H1 (cell line): ENCODE measurements at regions of chr1 and their contacts with region 1.

Region 1: DNA sequence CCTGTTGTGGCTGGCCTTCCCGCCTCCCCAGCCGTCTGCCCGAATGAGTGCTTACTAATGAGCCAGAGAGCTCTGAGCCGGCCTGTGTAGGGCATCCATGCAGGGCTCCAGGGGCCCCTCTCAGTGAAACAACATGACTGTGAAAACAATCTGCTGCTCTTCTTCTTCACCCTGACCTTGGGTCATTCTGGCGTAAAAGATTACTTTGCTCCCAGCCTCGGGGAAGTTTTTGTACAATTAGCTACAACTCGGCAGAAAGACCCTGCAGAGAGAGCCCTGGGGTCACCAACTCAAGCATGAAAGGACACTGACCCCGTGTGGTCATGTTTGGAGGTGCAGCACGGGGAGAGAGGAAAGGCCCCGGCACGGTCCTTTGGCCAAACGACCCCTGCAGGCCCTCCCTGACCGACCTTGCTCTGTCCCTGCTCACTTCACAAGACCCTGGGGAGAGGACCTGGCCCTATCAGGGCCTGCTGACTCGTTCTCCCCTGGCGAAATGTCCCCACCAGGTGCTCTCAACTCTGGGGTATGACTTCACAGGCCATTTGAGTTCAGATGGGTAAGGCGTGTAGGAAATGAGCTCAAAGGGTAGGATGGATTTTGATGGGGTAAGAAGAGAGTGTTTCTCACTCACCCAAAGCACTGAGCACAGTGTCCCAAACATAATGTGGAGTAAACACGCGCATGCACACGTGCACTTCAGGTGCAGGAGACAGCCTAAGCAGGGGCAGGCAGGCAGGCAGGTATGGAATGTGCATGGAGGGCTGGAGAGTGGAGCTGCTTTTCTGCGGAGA is 22.9 kb upstream of the FAM20B start:
- DNase-seq: peak; percentile 82 to 99
- H3K4me3 ChIP-seq: peak overlapping the region in 1 of 4 experiments; percentile 39; a peak in 1 of 8 replicates
- H3K27ac ChIP-seq: no peak overlapping the region
- H3K4me1 ChIP-seq: no peaks in the 10 kb centered on the region
- H3K27me3 ChIP-seq: no peaks in the 10 kb centered on the region
- CTCF ChIP-seq: peak; percentile 83 to 98 (median 97)
- EP300 ChIP-seq: no peak
- POLR2A ChIP-seq: no peak
- RAD21 ChIP-seq: peak; percentile 97 to 98

Region 2: DNA sequence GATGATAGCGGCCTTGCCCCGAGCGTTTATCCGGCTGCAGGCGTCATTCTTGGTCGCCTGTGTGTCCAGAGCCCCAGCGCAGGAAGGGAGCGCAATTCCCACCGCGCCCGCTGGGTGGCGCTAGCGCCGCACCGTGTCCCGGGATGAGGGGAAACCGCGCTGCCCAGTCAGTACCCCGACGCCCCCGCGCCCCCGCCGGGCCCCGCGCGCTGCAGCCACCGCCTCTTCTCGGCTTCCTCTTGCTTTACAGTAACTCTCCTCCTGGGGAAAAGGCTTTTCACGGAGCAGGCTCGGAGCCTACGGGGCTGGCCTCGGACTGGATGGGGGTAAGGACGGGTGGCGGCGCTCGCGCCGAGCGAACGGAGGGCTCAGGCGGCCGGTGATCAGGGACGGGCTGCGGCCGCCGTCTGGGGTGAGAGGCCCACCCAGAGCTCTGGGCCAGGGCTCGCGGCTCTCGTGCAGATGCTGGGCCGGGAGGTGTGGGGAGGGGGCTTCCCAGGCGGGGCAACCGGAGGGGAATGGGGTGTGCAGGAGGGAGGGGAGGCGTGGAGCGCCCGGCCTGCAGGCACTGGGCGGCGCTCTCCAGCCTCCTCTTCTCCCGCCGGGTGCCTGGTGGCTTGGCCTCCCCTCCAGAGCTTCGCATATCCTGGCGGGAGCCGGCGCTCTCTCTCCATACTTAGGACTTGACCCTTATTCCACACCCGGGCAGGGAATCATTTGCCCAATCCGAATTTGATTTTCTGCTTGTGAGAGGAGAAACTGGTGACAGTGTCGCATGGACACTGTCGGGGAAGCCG is 460.0 kb before region 1 on chr1:
- CTCF ChIA-PET with region 1: interaction called, 92 read pairs
- POLR2A ChIA-PET with region 1: interaction called, 4 read pairs
- DNase-seq: peak; percentile 71 to 100
- H3K4me3 ChIP-seq: peak overlapping the region; percentile 51 to 94 (median 90)
- H3K27ac ChIP-seq: peak overlapping the region; percentile 73; the same call in 1 of the 2 replicates
- H3K4me1 ChIP-seq: peaks cover 0 to 8% (median 3%) of the 10 kb centered on the region in 4 experiments; a peak in 2 of 7 replicates
- H3K27me3 ChIP-seq: no peaks in the 10 kb centered on the region
- CTCF ChIP-seq: peak; percentile 77 to 94 (median 92)
- EP300 ChIP-seq: no peak; a peak in 1 of 3 replicates
- POLR2A ChIP-seq: no peak; a peak in 1 of 3 replicates
- RAD21 ChIP-seq: peak; percentile 82 to 88

Region 3: DNA sequence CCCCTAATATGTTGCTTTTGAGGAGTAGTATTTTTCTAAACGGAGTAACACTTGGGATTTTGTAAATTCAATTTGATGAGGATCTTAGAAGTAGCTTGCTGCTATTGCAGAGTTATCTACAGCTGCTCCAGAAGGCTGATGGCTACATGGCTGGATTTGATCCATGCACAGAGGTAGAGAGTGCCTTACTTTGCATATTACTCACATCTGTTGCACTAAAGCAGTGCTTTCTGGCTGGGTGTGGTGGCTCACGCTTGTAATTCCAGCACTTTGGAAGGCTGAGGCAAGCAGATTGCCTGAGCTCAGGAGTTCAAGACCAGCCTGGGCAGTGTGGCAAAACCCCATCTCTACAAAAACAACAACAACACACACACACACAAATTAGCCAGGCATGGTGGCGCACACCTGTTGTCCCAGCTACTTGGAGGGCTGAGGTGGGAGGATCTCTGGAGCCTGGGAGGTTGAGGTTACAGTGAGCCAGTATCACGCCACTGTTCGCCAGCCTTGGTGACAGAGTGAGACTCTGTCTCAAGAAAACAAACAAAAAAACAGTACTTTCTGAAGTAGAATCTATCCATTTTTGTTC is 253.1 kb before region 1 on chr1:
- CTCF ChIA-PET with region 1: interaction called, 15 read pairs
- POLR2A ChIA-PET with region 1: no interaction called
- DNase-seq: no peak
- H3K4me3 ChIP-seq: no peak overlapping the region
- H3K27ac ChIP-seq: no peak overlapping the region
- H3K4me1 ChIP-seq: no peaks in the 10 kb centered on the region; a peak in 1 of 7 replicates
- H3K27me3 ChIP-seq: no peaks in the 10 kb centered on the region
- CTCF ChIP-seq: no peak
- EP300 ChIP-seq: no peak
- POLR2A ChIP-seq: no peak
- RAD21 ChIP-seq: no peak

Region 4: DNA sequence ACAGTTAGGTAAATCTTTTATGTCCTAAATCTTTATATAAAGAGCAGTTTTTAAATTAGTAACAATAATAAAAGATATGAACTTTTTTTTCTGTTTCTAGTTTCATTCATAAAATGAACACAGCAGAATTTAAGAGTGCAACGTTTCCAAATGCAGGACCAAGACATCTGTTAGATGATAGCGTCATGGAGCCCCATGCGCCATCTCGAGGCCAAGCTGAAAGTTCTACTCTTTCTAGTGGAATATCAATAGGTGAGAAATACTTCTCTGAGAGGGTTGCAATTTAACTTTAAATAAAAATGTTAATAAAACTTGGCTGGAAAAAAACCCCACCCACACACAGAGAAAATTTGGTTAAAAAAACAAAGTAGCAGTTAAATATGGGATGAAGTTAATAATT is 116.9 kb before region 1 on chr1:
- CTCF ChIA-PET with region 1: interaction called, 12 read pairs
- POLR2A ChIA-PET with region 1: no interaction called
- DNase-seq: no peak
- H3K4me3 ChIP-seq: no peak overlapping the region
- H3K27ac ChIP-seq: no peak overlapping the region
- H3K4me1 ChIP-seq: no peaks in the 10 kb centered on the region
- H3K27me3 ChIP-seq: no peaks in the 10 kb centered on the region
- CTCF ChIP-seq: no peak
- EP300 ChIP-seq: no peak
- POLR2A ChIP-seq: no peak
- RAD21 ChIP-seq: 0 out of 4 replicates have a peak, but pooled peaks of 1 of the 2 experiments have one; percentile 3

Region 5: DNA sequence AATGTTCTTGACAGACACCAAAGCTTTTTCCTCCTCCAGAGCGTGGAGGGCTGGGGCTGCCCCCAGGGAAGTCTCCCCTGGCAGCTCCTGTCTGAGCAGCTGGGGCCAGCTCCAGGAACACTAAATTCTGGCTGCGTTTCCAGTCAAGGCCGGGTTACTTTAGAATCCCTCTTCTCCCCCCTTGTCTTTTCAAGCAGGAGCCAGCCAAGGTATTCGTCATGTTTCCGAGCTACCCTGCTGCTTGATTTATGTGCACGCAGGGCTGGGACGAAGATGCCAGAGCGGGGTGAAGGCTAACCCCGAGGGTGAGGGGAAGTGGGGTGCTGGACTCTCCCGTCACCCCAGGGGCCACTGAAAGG is 63.8 kb before region 1 on chr1:
- CTCF ChIA-PET with region 1: interaction called, 29 read pairs
- POLR2A ChIA-PET with region 1: interaction called, 3 read pairs
- DNase-seq: peak in 1 of 2 experiments; percentile 42
- H3K4me3 ChIP-seq: no peak overlapping the region
- H3K27ac ChIP-seq: no peak overlapping the region
- H3K4me1 ChIP-seq: peaks cover 0 to 2% (median 0%) of the 10 kb centered on the region in 4 experiments; a peak in 2 of 7 replicates
- H3K27me3 ChIP-seq: no peaks in the 10 kb centered on the region
- CTCF ChIP-seq: no peak
- EP300 ChIP-seq: no peak
- POLR2A ChIP-seq: no peak
- RAD21 ChIP-seq: no peak

Region 6: GRCh38 chr1:179016747-179017549 is 14.2 kb after region 1 on chr1:
- CTCF ChIA-PET with region 1: interaction called, 19 read pairs
- POLR2A ChIA-PET with region 1: no interaction called
- DNase-seq: no peak
- H3K4me3 ChIP-seq: no peak overlapping the region
- H3K27ac ChIP-seq: no peak overlapping the region
- H3K4me1 ChIP-seq: no peaks in the 10 kb centered on the region
- H3K27me3 ChIP-seq: no peaks in the 10 kb centered on the region
- CTCF ChIP-seq: no peak
- EP300 ChIP-seq: no peak
- POLR2A ChIP-seq: no peak
- RAD21 ChIP-seq: no peak